T-cell (primary cell): ENCODE measurements at regions of chr13 and their contacts with region 1.

Region 1: DNA sequence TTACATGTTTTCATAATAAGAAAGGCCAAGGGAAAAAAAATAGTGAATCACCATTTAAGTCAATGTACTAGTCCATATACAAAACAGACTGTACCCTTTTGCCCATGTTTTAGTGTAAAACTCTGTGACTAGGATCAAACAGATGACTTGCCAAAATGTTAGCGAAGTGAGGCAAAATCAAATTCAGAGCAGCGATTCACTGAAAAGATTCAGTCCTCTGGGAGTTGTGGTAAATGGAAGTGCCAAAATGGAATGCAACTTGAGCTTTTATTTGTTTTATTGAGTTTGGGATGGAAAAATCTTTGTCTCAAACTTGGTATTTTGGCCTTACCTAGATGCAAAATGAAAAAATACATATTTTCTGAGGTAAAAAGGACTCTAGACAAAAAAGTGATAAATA is 9.1 kb downstream of the CDADC1 start:
- DNase-seq: no peak
- ATAC-seq: no peak
- H3K4me3 ChIP-seq: no peak overlapping the region
- H3K4me3 Mint-ChIP-seq: peak overlapping the region in 2 of 3 donors; percentile 78 to 87
- H3K27ac ChIP-seq: no peak overlapping the region
- H3K27ac Mint-ChIP-seq: peak overlapping the region; percentile 63 to 87
- H3K4me1 ChIP-seq: peaks cover 0 to 12% of the 10 kb centered on the region in 2 experiments
- H3K4me1 Mint-ChIP-seq: peaks cover 40 to 58% (median 55%) of the 10 kb centered on the region in 3 donors
- H3K27me3 ChIP-seq: no peaks in the 10 kb centered on the region
- H3K27me3 Mint-ChIP-seq: no peaks in the 10 kb centered on the region

Region 2: GRCh38 chr13:48979892-48980291 is 276.9 kb before region 1 on chr13:
- CTCF ChIA-PET with region 1: no interaction called
- POLR2A ChIA-PET with region 1: no interaction called
- DNase-seq: no peak
- ATAC-seq: no peak
- H3K4me3 ChIP-seq: no peak overlapping the region
- H3K4me3 Mint-ChIP-seq: no peak overlapping the region
- H3K27ac ChIP-seq: no peak overlapping the region
- H3K27ac Mint-ChIP-seq: no peak overlapping the region
- H3K4me1 ChIP-seq: peaks cover 6 to 20% of the 10 kb centered on the region in 2 experiments
- H3K4me1 Mint-ChIP-seq: peaks cover 53 to 59% (median 56%) of the 10 kb centered on the region in 3 donors
- H3K27me3 ChIP-seq: no peaks in the 10 kb centered on the region
- H3K27me3 Mint-ChIP-seq: no peaks in the 10 kb centered on the region

Region 3: GRCh38 chr13:50873467-50873866 is 1616.6 kb after region 1 on chr13:
- CTCF ChIA-PET with region 1: no interaction called
- POLR2A ChIA-PET with region 1: interaction called in 1 of 2 experiments, 12 read pairs
- DNase-seq: no peak
- ATAC-seq: no peak
- H3K4me3 ChIP-seq: no peak overlapping the region
- H3K4me3 Mint-ChIP-seq: no peak overlapping the region
- H3K27ac ChIP-seq: no peak overlapping the region
- H3K27ac Mint-ChIP-seq: no peak overlapping the region
- H3K4me1 ChIP-seq: no peaks in the 10 kb centered on the region
- H3K4me1 Mint-ChIP-seq: peaks cover 0 to 7% (median 0%) of the 10 kb centered on the region in 3 donors
- H3K27me3 ChIP-seq: no peaks in the 10 kb centered on the region
- H3K27me3 Mint-ChIP-seq: peaks cover 0 to 3% of the 10 kb centered on the region in 2 donors